AG04450 (cell line): ENCODE measurements at regions of chr11 and their contacts with region 1.

Region 1: DNA sequence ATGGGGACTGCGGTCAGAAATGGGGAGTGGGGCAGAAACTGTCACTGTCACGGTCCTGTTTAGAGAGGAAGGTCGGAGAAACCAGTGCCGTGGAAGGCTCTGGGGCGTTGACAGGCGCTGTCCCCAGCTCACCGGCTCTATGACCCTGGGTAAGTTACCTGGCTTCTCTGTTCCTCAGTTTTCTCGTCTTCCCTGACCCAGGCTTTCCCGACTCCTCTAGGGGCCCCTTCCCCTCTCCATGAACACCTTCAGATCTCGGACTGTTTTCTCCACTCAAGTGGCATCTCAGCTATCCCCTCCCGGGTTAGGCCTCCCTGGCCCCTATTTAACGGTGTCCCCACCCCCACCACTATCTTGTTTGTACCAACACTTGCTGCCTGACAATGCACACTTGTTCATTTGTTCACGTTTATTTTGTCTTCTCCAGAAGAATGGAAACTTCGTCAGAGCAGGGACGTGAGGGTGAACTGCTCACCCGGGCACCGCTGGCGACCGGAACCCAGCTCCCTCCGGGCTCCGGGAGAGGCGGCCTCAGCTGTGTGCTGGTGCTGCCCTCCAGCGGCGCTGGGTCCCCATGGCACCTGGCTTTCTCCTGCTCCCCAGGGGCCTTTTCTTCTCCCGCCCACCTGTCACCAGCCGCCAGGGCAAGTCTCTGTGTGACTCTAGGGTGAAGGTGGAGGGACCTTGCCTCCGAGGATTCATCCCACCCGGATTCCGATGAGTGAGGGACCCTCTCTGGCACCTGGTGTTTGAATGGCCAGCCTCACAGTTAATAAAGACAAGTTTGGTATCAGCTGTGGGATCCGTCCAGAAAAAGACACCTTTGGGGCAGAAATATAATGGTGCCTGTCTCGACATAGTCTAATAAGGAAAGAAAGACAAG is 33.1 kb upstream of the SLC35C1 start:
- DNase-seq: peak; percentile 23
- H3K4me3 ChIP-seq: peak overlapping the region; percentile 63
- H3K27ac ChIP-seq: no peak overlapping the region
- H3K27me3 ChIP-seq: peaks cover 8% of the 10 kb centered on the region
- CTCF ChIP-seq: peak; percentile 94

Region 2: GRCh38 chr11:45354976-45355705 is 416.7 kb before region 1 on chr11:
- CTCF ChIA-PET with region 1: interaction called, 10 read pairs
- POLR2A ChIA-PET with region 1: no interaction called
- DNase-seq: no peak
- H3K4me3 ChIP-seq: peak overlapping the region; percentile 55
- H3K27ac ChIP-seq: no peak overlapping the region
- H3K27me3 ChIP-seq: peaks cover 6% of the 10 kb centered on the region
- CTCF ChIP-seq: no peak

Region 3: GRCh38 chr11:45655347-45655756 is 116.5 kb before region 1 on chr11:
- CTCF ChIA-PET with region 1: interaction called, 20 read pairs
- POLR2A ChIA-PET with region 1: no interaction called
- DNase-seq: peak; percentile 26
- H3K4me3 ChIP-seq: no peak overlapping the region
- H3K27ac ChIP-seq: no peak overlapping the region
- H3K27me3 ChIP-seq: peaks cover 2% of the 10 kb centered on the region
- CTCF ChIP-seq: peak; percentile 95

Region 4: DNA sequence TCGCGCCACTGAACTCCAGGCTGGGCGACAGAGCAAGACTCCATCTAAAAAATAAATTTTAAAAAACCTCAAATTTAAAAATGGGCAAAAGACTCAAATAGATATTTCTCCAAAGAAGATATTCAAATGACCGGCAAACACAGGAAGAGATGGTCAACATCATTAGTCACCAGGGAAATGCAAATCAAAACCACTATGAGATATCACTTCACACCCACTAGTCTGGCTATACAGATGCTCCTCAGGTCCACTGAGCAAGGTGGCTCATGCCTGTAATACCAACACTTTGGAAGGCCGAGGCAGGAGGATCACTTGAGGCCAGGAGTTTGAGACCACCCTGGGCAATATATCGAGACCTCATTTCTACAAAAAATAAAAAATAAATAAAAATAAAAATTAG is 10.1 kb before region 1 on chr11:
- CTCF ChIA-PET with region 1: interaction called, 25 read pairs
- POLR2A ChIA-PET with region 1: no interaction called
- DNase-seq: no peak
- H3K4me3 ChIP-seq: no peak overlapping the region
- H3K27ac ChIP-seq: no peak overlapping the region
- H3K27me3 ChIP-seq: peaks cover 5% of the 10 kb centered on the region
- CTCF ChIP-seq: no peak

Region 5: GRCh38 chr11:45804761-45805304 is 33.0 kb after region 1 on chr11 and contains the start of gene SLC35C1:
- CTCF ChIA-PET with region 1: interaction called, 61 read pairs
- POLR2A ChIA-PET with region 1: no interaction called
- DNase-seq: peak; percentile 75
- H3K4me3 ChIP-seq: peak within 1 kb of the TSS; percentile 93
- H3K27ac ChIP-seq: peak within 1 kb of the TSS; percentile 78
- H3K27me3 ChIP-seq: peaks cover 9% of the 10 kb centered on the region
- CTCF ChIP-seq: 0 out of 2 replicates have a peak, but pooled peaks have one; percentile 3
- polyA plus RNA-seq, gene SLC35C1: 4.7 and 10.6 TPM in 2 replicates

Region 6: DNA sequence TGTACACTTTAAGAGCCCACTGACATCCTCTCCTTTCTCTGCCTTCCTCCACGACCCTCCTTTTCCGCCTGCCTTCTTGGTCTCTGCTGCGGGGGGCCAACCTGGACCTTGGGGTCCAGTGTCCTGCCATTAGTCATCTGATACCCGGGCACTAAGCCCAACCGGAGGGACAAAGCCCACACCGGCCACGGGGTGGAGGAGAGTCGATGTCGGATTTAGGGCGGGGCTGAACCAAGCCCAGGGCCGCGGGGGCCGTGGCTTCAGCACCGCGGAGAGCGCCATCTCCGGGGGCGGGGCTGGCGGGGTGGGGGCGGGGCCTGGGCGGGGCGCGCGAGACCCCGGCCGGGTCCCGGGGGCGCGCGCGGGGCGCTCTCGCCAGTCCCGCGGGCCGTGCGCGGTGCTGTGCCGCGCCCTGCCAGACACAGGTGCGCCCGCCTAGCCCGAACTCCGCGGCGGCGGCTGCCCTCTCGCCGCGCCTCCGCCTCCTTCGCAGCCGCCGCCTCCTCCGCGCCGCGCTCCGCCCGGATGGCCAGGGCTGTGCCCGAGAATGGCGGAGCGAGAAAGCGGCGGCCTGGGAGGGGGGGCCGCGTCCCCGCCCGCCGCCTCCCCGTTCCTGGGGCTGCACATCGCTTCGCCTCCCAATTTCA is 113.6 kb after region 1 on chr11 and contains the start of gene MAPK8IP1:
- CTCF ChIA-PET with region 1: no interaction called
- POLR2A ChIA-PET with region 1: no interaction called
- DNase-seq: no peak
- H3K4me3 ChIP-seq: peak within 1 kb of the TSS; percentile 47
- H3K27ac ChIP-seq: no peak within 1 kb of the TSS
- H3K27me3 ChIP-seq: peaks cover 17% of the 10 kb centered on the region
- CTCF ChIP-seq: no peak
- polyA plus RNA-seq, gene MAPK8IP1: 5.6 and 7.6 TPM in 2 replicates